ENCODE measurements at regions of chr7 and their contacts with region 1.

Region 1: DNA sequence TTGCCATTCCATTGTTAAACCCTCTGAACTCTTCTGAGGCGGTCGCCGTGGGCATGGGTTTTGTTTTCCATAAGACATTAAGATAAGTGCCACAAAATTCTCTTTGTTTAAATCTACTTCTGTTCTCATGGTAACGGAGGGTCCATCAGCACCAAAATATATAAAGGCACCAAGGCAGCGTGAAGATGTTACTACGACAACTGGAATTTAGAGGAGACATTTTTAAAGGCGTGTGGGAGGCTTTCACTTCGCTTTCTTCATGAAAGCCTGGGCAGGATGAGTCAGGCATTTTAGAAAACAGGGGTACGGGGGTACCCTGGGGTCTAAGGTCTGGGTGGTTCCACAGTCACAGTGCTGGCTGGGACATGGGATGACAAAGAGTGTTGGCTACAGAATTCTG is 34.0 kb downstream of the SMKR1 start:
- DNase-seq: peak in 3 of 35 experiments; percentile 3 to 26 (median 15)
- ATAC-seq: peak in 2 of 4 experiments; percentile 24 to 32
- H3K4me3 ChIP-seq: no peak overlapping the region
- H3K4me3 Mint-ChIP-seq: peak overlapping the region; percentile 10 to 64 (median 54)
- H3K27ac ChIP-seq: no peak overlapping the region
- H3K27ac Mint-ChIP-seq: peak overlapping the region; percentile 60 to 77
- H3K4me1 ChIP-seq: peaks cover 2 to 20% of the 10 kb centered on the region in 2 experiments
- H3K4me1 Mint-ChIP-seq: peaks cover 8 to 14% (median 11%) of the 10 kb centered on the region in 3 donors
- H3K27me3 ChIP-seq: peaks cover 0 to 4% of the 10 kb centered on the region in 2 experiments
- H3K27me3 Mint-ChIP-seq: peaks cover 0 to 2% of the 10 kb centered on the region in 2 donors

Region 2: GRCh38 chr7:129279762-129280161 is 256.6 kb before region 1 on chr7:
- CTCF ChIA-PET with region 1: no interaction called
- POLR2A ChIA-PET with region 1: no interaction called
- DNase-seq: no peak
- ATAC-seq: no peak
- H3K4me3 ChIP-seq: no peak overlapping the region
- H3K4me3 Mint-ChIP-seq: no peak overlapping the region
- H3K27ac ChIP-seq: no peak overlapping the region
- H3K27ac Mint-ChIP-seq: no peak overlapping the region
- H3K4me1 ChIP-seq: no peaks in the 10 kb centered on the region
- H3K4me1 Mint-ChIP-seq: peaks cover 0 to 4% (median 0%) of the 10 kb centered on the region in 3 donors
- H3K27me3 ChIP-seq: no peaks in the 10 kb centered on the region
- H3K27me3 Mint-ChIP-seq: no peaks in the 10 kb centered on the region

Region 3: GRCh38 chr7:129343099-129343700 is 193.1 kb before region 1 on chr7:
- CTCF ChIA-PET with region 1: no interaction called
- POLR2A ChIA-PET with region 1: interaction called in 1 of 2 experiments, 10 read pairs
- DNase-seq: peak in 4 of 35 experiments; percentile 3 to 63 (median 8)
- ATAC-seq: no peak
- H3K4me3 ChIP-seq: no peak overlapping the region
- H3K4me3 Mint-ChIP-seq: no peak overlapping the region
- H3K27ac ChIP-seq: no peak overlapping the region
- H3K27ac Mint-ChIP-seq: no peak overlapping the region
- H3K4me1 ChIP-seq: no peaks in the 10 kb centered on the region
- H3K4me1 Mint-ChIP-seq: peaks cover 10 to 21% (median 18%) of the 10 kb centered on the region in 3 donors
- H3K27me3 ChIP-seq: no peaks in the 10 kb centered on the region
- H3K27me3 Mint-ChIP-seq: no peaks in the 10 kb centered on the region